B cell (primary cell): ENCODE measurements at regions of chr4 and their contacts with region 1.

Region 1: GRCh38 chr4:113665036-113665435 is 96.5 kb downstream of the CAMK2D start:
- DNase-seq: no peak
- ATAC-seq: no peak
- H3K4me3 ChIP-seq: no peak overlapping the region
- H3K4me3 Mint-ChIP-seq: no peak overlapping the region
- H3K27ac ChIP-seq: peak overlapping the region in 1 of 2 donors; percentile 43
- H3K27ac Mint-ChIP-seq: no peak overlapping the region
- H3K4me1 ChIP-seq: no peaks in the 10 kb centered on the region
- H3K4me1 Mint-ChIP-seq: peaks cover 18% of the 10 kb centered on the region
- H3K27me3 ChIP-seq: no peaks in the 10 kb centered on the region
- H3K27me3 Mint-ChIP-seq: no peaks in the 10 kb centered on the region
- CTCF ChIP-seq: no peak

Region 2: DNA sequence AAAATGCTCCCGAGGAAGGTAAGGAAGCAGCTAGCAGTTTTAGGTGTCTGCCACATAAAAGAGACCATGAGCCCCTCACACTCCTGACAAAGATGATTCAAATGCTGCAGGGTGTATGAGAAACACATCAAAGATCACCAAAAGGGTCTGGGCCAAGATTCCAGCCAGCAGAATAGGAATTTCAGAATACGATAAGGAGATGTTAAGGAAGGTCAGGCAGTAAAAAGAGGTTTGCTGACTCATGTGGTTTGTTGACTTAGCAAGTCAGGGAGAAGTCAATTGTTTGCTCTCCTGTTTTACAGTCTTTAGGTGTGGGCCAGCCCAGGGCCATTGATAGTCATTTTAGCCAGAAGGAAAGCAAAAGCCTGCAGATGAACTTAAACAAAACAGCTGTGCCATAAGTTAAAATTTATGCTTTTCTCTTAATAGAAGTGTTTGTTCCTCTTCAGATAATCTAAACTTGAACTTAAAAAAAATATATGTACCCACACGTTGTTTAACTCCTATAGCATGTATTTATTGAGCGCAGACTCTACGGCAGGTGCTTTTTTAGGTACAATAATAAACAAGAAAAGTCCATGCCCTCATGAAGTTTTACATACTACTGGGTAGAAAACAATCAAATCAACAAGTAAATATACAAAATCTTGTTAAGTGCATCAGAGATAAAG is 19.1 kb before region 1 on chr4:
- CTCF ChIA-PET with region 1: no interaction called
- POLR2A ChIA-PET with region 1: no interaction called
- intact Hi-C with region 1: loop called (anchors 2 kb)
- DNase-seq: no peak
- ATAC-seq: no peak
- H3K4me3 ChIP-seq: no peak overlapping the region
- H3K4me3 Mint-ChIP-seq: no peak overlapping the region
- H3K27ac ChIP-seq: peak overlapping the region in 1 of 2 donors; percentile 63
- H3K27ac Mint-ChIP-seq: peak overlapping the region; percentile 42
- H3K4me1 ChIP-seq: peaks cover 32 to 44% of the 10 kb centered on the region in 2 donors
- H3K4me1 Mint-ChIP-seq: peaks cover 59% of the 10 kb centered on the region
- H3K27me3 ChIP-seq: no peaks in the 10 kb centered on the region
- H3K27me3 Mint-ChIP-seq: no peaks in the 10 kb centered on the region
- CTCF ChIP-seq: no peak

Region 3: DNA sequence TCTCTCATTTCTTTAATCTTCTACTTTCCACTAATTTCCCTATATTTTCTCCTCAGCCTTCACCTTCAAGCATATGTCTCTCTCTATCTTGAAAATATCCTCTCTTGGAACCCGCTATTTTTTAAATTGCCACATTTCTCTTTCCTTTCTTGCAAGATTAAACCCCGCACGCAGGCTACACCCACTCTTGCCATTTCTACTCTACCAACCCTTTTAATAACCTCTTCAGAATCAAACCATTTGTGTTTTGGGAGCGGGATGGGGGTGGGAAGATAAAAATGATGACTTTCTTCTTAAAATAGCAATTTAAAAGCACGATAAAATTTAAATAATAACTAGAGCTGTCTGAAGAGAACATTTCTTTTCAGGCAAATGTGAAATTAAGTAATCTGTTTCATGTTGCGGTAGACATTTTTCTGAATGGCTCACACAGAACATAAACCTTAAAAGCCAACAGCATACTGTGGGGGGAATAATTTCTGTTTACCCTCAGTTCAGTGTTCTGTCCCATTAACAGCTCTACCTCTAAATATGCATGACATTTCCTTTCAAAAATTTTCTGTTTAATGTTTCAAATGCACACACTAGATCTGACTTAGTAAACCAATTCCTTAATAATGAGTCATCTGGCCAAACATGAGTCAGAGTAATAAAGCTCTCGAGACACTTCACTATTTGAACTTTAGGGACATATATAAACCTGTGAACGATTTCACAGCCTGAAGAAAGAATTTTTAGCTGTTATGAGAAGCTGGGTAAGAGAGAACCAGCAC is 293.9 kb after region 1 on chr4:
- CTCF ChIA-PET with region 1: no interaction called
- POLR2A ChIA-PET with region 1: no interaction called
- intact Hi-C with region 1: no loop called
- DNase-seq: no peak
- ATAC-seq: no peak
- H3K4me3 ChIP-seq: no peak overlapping the region
- H3K4me3 Mint-ChIP-seq: no peak overlapping the region
- H3K27ac ChIP-seq: no peak overlapping the region
- H3K27ac Mint-ChIP-seq: no peak overlapping the region
- H3K4me1 ChIP-seq: no peaks in the 10 kb centered on the region
- H3K4me1 Mint-ChIP-seq: no peaks in the 10 kb centered on the region
- H3K27me3 ChIP-seq: peaks cover 0 to 3% (median 2%) of the 10 kb centered on the region in 4 experiments
- H3K27me3 Mint-ChIP-seq: peaks cover 27% of the 10 kb centered on the region
- CTCF ChIP-seq: no peak